ENCODE measurements at regions of chr1 and their contacts with region 1.

Region 1: DNA sequence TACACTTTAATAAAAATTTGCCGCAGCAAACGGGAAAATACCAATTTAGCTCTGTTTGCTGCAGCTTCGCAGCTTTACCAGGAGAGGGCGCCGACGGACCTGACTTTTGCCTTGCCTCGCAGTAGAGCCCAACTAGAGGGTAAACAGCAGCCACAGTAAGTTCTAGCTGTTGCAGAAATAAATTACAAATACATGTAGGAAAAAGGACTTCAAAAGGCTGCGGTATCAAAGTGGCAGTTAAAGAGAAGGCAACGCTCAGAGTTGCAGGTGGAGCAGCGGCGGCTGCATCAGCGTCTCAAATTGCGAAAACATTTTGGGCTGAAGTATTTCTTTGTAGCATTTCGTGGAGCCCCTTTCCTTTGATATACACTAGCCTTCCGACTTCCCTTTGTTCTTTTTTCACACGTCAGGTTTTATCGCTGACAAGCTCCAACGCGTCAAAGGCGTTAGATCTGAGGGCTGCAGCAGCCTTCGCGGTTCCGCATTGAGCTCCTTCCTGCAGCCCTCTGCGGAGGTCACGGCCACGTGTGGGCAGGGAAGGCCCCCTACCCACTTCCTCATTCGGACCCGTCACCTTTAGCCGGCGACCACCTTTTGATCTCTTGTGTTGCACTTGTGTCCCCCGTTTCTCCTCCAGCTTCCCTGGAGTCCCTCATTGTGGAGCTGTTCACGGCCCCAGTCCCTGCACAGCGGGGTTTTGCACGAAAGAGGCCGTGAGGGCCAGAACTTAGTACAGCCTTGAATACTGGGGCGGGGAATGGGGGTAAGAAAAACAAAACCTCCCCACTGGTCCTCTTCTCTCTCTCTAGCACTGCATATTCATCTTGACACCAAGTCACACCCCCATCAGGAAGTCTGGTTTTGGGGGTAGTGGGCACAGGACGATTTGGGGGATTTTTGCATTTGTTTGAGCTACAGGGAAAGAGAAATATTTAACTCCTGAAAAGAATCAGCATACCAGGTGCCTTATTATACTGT is 72.8 kb downstream of the S1PR1 start:
- DNase-seq: peak; percentile 53
- CTCF ChIP-seq: peak; percentile 93

Region 2: GRCh38 chr1:101081496-101082488 is 227.8 kb before region 1 on chr1:
- CTCF ChIA-PET with region 1: no interaction called
- POLR2A ChIA-PET with region 1: no interaction called
- DNase-seq: no peak
- CTCF ChIP-seq: no peak

Region 3: DNA sequence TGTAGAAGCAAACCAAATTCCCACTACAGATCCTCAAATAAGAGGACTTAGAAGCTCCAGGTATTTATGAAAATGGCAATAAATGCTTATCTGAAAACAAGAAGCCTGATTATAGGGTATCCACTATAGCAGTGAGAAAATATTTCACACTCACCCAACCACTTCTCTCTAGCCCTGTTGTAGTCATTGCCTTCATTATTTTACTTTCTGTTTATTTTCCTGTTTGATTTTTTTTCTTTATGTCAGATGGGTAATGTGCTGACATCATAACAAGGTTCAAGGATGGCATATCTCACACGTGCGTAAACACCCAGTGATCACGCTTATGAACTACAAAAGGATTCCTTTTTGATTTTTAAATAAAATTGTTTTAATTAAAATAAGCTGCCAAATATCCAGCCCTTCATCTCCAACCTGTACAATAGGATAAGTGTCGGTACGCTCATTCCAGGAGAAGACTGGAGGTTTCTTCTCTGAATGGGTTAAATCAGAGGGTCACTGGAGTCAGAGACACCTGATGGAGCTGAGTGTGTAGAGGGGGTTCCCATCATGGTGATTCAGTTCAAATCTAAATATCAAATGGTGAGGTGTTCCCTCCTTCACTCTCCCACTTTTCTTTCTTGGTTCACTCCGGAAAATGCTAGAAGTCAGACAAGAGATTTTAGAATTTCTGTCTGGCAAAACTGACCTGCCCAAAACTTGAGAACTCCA is 81.0 kb before region 1 on chr1:
- CTCF ChIA-PET with region 1: no interaction called
- POLR2A ChIA-PET with region 1: no interaction called
- DNase-seq: no peak
- CTCF ChIP-seq: no peak

Region 4: GRCh38 chr1:101298663-101299062 is 11.0 kb before region 1 on chr1:
- CTCF ChIA-PET with region 1: interaction called, 175 read pairs
- POLR2A ChIA-PET with region 1: no interaction called
- DNase-seq: no peak
- CTCF ChIP-seq: no peak

Region 5: GRCh38 chr1:101330427-101331130 is 21.0 kb after region 1 on chr1:
- CTCF ChIA-PET with region 1: interaction called, 17 read pairs
- POLR2A ChIA-PET with region 1: no interaction called
- DNase-seq: no peak
- CTCF ChIP-seq: no peak

Region 6: DNA sequence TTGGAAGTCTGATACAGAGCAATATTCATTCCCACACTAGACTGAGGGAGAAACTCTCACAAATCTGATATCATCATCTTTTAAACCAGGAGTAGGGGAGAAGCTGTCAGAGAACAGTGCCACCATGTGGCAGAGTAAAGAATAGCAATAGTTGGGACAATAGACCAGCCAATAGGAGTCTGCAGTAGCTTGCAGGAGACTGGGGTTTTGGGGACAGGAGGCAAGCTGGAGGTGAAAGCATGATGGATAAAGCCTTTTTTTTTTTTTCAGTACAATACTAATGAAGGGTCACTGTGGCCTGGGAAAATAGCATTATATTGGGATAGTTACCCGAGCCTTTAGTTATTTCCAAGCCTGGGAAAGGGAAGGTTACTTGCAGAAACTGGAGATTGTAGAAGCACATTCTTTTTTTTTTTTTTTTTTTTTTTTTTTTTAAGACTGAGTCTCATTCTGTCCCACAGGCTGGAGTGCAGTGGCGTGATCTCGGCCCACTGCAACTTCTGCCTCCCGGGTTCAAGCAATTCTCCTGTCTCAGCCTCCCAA is 47.9 kb after region 1 on chr1:
- CTCF ChIA-PET with region 1: interaction called, 68 read pairs
- POLR2A ChIA-PET with region 1: interaction called, 6 read pairs
- DNase-seq: peak; percentile 82
- CTCF ChIP-seq: peak; percentile 79

Region 7: GRCh38 chr1:101371259-101371658 is 61.6 kb after region 1 on chr1:
- CTCF ChIA-PET with region 1: interaction called, 11 read pairs
- POLR2A ChIA-PET with region 1: interaction called, 5 read pairs
- DNase-seq: peak; percentile 71
- CTCF ChIP-seq: no peak

Region 8: DNA sequence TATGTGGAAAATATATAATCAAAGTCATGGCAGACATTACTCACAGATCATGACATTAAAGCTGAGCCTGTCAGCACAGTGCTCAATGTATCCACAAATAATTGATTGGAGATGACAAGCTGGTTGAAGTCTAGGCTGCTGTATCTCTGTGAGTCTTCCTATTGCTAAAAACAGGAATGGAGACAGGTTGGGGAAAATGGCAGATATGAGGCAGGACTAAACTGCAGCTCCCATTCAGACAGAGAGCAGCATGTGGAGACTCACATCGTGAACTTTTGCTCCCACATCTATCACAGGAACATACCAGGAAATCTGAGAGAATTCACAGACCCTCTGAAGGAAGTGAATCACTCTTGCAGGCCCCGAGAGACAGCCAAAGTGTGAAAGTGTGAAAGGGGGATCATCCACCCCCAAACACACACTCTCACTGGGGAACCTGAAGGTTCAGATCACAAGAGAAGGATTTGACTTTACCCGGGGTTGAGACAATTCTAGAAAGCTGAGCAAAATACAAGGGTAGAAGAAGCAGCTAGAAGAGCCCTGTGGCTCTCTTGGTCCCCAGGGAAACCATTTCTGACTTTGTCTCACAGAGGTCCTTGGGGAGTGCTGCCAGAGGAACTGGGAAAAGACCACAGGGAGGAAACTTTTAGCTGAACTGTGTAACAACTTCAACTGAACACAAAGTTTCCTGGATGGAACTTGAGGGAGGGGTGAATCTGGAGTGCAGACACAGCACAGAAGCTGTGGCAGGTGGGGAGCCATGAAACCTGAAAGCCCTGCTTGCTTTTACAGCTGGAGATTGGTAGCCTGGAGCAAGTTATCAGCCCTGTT is 100.6 kb after region 1 on chr1:
- CTCF ChIA-PET with region 1: interaction called, 58 read pairs
- POLR2A ChIA-PET with region 1: interaction called, 3 read pairs
- DNase-seq: peak; percentile 20
- CTCF ChIP-seq: no peak

Region 9: DNA sequence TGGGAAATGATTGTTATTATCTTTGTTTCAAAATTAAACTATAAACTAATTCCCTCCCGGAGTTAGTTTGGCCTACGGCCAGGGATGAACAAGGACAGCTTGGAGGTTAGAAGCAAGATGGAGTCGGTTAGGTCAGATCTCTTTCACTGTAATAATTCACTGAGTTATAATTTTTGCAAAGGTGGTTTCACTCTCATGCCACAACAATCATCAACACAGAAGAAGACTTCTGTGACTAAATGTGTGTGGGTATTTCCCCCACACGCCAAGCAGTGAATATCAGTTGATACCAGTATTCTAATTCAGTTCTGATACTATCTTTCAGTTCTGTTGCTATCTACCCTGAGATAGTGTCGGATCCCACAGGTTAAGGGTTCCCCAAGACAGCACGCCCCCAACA is 142.3 kb after region 1 on chr1:
- CTCF ChIA-PET with region 1: interaction called, 16 read pairs
- POLR2A ChIA-PET with region 1: no interaction called
- DNase-seq: no peak
- CTCF ChIP-seq: no peak

Measured in GM10248 (cell line).